Heart left ventricle (tissue), 16 donors: ENCODE measurements at regions of chr3 and their contacts with region 1.

Region 1: GRCh38 chr3:154886437-154886836 is 193.7 kb upstream of the MME start:
- DNase-seq: peak in 1 of 5 donors; percentile 11
- ATAC-seq: peak; percentile 57 to 84 (median 71)
- H3K4me3 ChIP-seq: no peak overlapping the region
- H3K27ac ChIP-seq: peak overlapping the region in 4 of 12 donors; percentile 11 to 43 (median 36)
- H3K4me1 ChIP-seq: peaks cover 0 to 15% (median 0%) of the 10 kb centered on the region in 12 donors
- H3K27me3 ChIP-seq: no peaks in the 10 kb centered on the region
- CTCF ChIP-seq: no peak
- POLR2A ChIP-seq: no peak

Region 2: DNA sequence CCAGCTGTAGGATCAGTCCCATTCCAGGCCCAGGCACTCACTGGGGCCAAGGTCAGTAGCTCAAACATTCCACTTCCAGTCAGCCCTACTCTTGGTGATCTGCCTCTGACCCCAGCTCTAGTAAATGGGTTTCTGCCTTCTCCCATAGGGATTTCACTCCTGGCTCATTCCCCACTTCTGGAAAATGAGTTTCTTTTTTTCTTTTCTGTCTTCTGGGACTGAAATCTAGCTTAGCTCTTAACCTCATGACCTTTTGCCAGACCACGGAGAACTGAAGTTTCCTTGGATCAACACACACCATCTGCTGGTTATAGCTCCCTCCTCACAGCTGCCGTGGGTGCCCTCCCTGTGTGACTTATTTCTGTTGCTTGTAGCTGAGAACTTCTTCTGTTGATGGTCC is 215.0 kb after region 1 on chr3:
- intact Hi-C with region 1: loop called in 1 of 10 experiments (anchors 10 kb)
- DNase-seq: peak in 4 of 5 donors; percentile 25 to 55 (median 38)
- ATAC-seq: peak in 3 of 4 donors; percentile 75 to 80 (median 80)
- H3K4me3 ChIP-seq: no peak overlapping the region
- H3K27ac ChIP-seq: peak overlapping the region in 1 of 12 donors; percentile 1
- H3K4me1 ChIP-seq: peaks cover 0 to 5% (median 0%) of the 10 kb centered on the region in 12 donors
- H3K27me3 ChIP-seq: no peaks in the 10 kb centered on the region
- CTCF ChIP-seq: no peak
- POLR2A ChIP-seq: no peak

Region 3: DNA sequence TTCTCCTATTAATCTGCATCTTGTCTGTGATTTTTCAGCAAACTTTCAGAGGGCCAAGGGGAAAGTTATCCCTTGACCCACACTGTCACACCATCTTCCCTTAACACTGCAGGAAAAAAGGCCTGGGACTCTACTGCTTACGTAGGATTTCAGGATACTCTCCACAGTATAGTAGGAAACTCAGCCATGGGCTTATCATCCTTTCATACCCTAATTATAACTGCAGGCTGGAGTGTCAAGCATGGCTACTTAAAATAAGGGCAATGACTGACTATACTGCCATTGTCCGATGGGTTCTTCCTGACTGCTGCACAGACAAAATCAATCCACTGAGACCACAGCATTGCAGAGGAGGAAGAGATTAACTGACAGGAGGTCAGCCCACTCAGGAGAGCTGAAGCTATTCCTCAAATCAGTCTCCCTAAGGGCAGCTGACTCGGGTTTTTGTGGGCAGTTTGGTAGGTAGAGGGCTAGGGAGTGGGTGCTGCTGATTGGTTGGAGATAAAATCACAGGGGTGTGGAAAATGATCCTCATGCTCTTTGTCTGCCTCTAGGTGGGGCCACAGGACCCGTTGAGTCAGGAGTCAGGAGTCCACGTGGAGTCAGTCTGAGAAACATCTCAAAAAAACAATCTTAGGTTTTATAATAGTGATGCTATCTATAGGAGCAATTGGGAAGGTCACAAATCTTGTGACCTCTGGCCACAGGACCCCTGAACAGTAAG is 525.2 kb after region 1 on chr3:
- intact Hi-C with region 1: no loop called
- DNase-seq: no peak
- ATAC-seq: peak; percentile 47 to 83 (median 64)
- H3K4me3 ChIP-seq: no peak overlapping the region
- H3K27ac ChIP-seq: no peak overlapping the region
- H3K4me1 ChIP-seq: peaks cover 0 to 11% (median 0%) of the 10 kb centered on the region in 12 donors
- H3K27me3 ChIP-seq: no peaks in the 10 kb centered on the region
- CTCF ChIP-seq: no peak
- POLR2A ChIP-seq: no peak